ENCODE measurements at regions of chr3 and their contacts with region 1.

Region 1: DNA sequence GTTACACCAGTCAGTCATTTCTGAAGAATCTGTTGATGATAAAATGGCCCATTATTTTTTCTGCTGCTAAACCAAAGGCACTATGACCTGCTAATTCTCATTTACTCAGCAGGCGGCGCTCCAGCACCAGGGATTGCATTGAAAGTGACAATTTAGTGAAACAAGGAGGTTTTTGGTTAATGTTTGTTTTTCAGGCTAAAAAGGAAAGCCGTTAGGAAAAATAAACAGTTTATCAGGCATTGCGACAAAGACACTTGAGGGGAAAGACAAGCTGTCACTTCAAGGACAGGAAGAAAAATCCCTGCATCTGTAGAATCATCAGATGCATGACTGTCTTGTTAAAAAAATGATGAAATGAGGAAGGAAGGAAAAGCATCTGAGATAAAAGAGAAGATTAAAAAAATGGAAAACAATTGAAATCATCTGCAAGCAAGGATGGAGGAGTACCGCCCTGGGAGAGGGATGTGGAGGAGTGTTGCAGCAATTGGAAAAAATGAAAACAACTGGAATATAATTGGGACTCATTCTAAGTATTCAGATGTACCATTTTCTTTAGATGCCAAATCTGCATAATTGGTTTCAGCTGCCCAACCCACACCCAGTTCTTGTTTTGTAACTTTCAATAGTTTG is 54.0 kb downstream of the NR1D2 start:
- DNase-seq: peak; percentile 35 to 56
- ATAC-seq: peak in 1 of 2 experiments; percentile 73; a peak in 4 of 6 replicates
- H3K4me3 ChIP-seq: no peak overlapping the region
- H3K27ac ChIP-seq: peak overlapping the region in 1 of 2 experiments; percentile 30; a peak in 1 of 6 replicates
- H3K4me1 ChIP-seq: 0 out of 3 replicates have a peak, but pooled peaks cover 4% of the 10 kb centered on the region
- CTCF ChIP-seq: peak; percentile 99
- EP300 ChIP-seq: no peak
- POLR2A ChIP-seq: no peak
- RAD21 ChIP-seq: peak; percentile 99 to 100

Region 2: DNA sequence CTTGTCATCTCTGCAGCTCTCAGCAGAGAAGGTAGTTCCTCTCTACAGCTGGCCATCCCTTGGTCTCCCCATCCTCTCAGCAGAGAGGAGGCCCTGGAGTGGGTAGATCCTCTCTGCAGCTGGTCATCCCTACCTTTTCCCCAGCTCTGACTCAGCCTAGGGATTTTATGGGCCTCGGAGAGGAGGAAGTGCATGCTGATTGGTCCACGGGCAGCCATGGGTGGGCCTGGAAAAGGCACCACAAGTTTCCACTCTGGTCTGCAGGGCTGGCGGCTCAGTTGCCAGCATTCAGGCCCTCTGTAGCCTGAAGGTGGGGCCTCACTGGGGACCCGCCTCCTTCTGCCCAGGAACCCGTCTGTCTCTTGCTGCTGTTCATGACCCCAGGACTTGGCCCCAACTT is 17.2 kb before region 1 on chr3:
- CTCF ChIA-PET with region 1: interaction called, 26 read pairs
- POLR2A ChIA-PET with region 1: no interaction called
- DNase-seq: no peak
- ATAC-seq: peak; percentile 54 to 62; a peak in 5 of 6 replicates
- H3K4me3 ChIP-seq: no peak overlapping the region
- H3K27ac ChIP-seq: no peak overlapping the region
- H3K4me1 ChIP-seq: peaks cover 8% of the 10 kb centered on the region; the same call in 1 of the 3 replicates
- CTCF ChIP-seq: no peak
- EP300 ChIP-seq: no peak
- POLR2A ChIP-seq: no peak
- RAD21 ChIP-seq: no peak

Region 3: DNA sequence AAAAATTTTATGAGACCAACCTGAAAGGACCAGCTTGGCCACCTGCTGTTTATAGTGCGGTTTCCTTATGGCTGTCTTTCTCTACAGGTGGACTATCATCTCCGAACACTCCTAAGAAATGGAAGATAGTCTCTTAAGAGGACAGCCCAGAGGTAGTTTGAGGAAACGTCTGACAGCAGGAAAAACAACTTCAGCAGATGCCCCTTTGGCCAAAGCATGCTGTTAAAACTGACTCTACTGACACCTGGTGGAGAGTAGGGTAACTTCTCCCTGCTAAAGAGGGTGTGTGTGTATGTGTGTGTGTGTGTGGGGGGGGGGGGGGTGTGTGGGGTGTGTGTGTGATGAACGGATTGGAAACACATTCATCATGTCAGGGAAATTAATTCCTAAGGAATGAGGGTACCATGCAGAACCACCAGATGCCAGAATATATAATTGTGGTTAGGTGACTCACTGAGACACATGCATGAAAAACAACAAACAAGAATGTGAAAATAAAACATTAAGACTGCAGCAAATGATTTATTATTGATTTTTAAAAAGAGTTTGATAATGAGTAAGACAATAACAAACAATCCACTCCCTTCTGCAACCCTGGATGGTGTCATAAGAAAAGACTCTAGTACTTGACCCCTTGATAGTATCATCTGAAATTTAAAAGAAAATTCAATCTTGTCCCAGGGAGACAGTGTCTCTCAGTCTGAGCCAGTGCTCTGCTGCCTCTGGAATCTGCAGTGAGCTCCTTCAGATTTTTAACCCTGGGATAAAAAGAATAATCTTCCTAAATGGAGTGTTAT is 239.0 kb after region 1 on chr3:
- CTCF ChIA-PET with region 1: interaction called, 29 read pairs
- POLR2A ChIA-PET with region 1: no interaction called
- DNase-seq: peak; percentile 65 to 78
- ATAC-seq: peak; percentile 83 to 92
- H3K4me3 ChIP-seq: no peak overlapping the region
- H3K27ac ChIP-seq: peak overlapping the region; percentile 11 to 53; a peak in 4 of 6 replicates
- H3K4me1 ChIP-seq: peaks cover 43% of the 10 kb centered on the region
- CTCF ChIP-seq: peak; percentile 85
- EP300 ChIP-seq: no peak
- POLR2A ChIP-seq: no peak
- RAD21 ChIP-seq: peak; percentile 90 to 93

Region 4: GRCh38 chr3:24494618-24495325 is 495.6 kb after region 1 on chr3 and contains the start of gene THRB:
- CTCF ChIA-PET with region 1: interaction called, 11 read pairs
- POLR2A ChIA-PET with region 1: no interaction called
- DNase-seq: peak; percentile 68 to 70
- ATAC-seq: peak; percentile 79 to 90
- H3K4me3 ChIP-seq: peak within 1 kb of the TSS; percentile 93
- H3K27ac ChIP-seq: peak within 1 kb of the TSS; percentile 88 to 92
- H3K4me1 ChIP-seq: peaks cover 32% of the 10 kb centered on the region
- CTCF ChIP-seq: peak; percentile 22
- EP300 ChIP-seq: no peak
- POLR2A ChIP-seq: no peak
- RAD21 ChIP-seq: peak in 1 of 2 experiments; percentile 14; a peak in 1 of 5 replicates
- polyA plus RNA-seq, gene THRB: 2.0 and 2.6 TPM in 2 replicates

Region 5: GRCh38 chr3:24680214-24680967 is 681.3 kb after region 1 on chr3:
- CTCF ChIA-PET with region 1: interaction called, 44 read pairs
- POLR2A ChIA-PET with region 1: no interaction called
- DNase-seq: peak; percentile 53 to 58
- ATAC-seq: peak; percentile 83 to 95
- H3K4me3 ChIP-seq: no peak overlapping the region
- H3K27ac ChIP-seq: no peak overlapping the region
- H3K4me1 ChIP-seq: peaks cover 17% of the 10 kb centered on the region
- CTCF ChIP-seq: peak; percentile 75
- EP300 ChIP-seq: no peak
- POLR2A ChIP-seq: no peak
- RAD21 ChIP-seq: peak; percentile 62 to 63

Measured in A549 (cell line).